T-cell (primary cell): ENCODE measurements at regions of chr11 and their contacts with region 1.

Region 1: DNA sequence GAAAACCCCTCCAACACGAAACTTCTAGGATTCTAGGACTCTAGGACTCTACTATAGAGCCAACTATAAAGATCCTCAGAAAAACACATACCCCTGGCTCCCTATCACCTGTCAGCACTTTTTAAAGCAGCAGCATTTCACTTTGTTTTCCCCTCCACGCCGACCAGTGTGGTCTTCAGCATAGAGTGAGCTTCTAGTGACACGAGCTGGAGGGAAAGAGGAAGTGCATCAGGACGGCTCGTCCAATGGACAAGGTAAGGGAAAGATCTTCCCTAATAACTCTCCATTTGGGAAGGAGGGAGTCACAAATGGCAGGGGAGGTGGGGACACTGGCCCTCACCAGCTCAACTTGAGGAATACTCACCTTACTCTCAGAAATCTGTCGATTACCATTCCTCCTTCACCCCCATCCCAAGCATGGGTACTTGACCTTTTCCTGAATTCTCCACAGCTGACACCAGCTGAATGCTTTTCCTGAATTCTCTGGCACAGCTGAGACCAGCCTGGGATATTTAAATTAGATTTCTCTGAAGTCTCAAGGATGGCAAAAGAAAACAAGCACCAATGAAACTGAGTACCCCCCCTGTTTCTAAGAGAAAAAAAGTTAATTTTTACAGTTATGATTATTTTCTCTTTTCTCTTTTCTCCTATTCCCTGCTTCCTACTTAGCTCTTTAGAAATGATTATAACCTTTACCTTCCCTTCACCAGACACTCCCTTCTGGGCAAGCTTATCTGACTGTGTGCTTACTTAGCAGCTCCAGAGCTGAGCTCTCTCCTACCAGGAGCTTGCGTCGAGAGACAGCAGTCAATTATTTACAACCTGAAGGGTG is 33.3 kb upstream of the NNMT start:
- DNase-seq: peak in 9 of 35 experiments; percentile 8 to 51 (median 17)
- ATAC-seq: peak in 3 of 4 experiments; percentile 38 to 71 (median 41)
- H3K4me3 ChIP-seq: no peak overlapping the region
- H3K4me3 Mint-ChIP-seq: no peak overlapping the region
- H3K27ac ChIP-seq: no peak overlapping the region
- H3K27ac Mint-ChIP-seq: no peak overlapping the region
- H3K4me1 ChIP-seq: peaks cover 0 to 4% of the 10 kb centered on the region in 2 experiments
- H3K4me1 Mint-ChIP-seq: peaks cover 0 to 13% (median 2%) of the 10 kb centered on the region in 3 donors
- H3K27me3 ChIP-seq: peaks cover under 1 to 2% of the 10 kb centered on the region in 2 experiments
- H3K27me3 Mint-ChIP-seq: peaks cover 0 to 2% of the 10 kb centered on the region in 2 donors

Region 2: DNA sequence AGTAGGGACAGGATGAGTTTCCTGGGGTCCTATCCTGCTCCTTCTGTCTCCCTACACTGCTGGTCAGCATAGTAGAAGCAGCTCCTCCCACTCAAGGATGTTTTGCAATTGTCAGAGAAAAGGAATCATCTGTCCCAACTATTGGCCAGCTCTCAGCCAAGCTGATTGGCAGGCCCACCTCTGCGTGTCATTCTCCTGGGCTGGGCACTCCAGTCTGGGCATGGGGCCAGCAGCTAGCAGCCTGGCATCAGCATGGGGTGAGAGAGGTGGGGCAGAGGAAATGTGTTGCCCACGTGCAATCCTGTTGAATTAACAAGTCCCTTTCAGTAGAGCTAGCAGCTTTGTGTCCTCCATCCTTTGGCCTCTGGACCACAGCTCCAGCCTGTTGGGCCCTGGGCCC is 861.2 kb before region 1 on chr11:
- CTCF ChIA-PET with region 1: no interaction called
- POLR2A ChIA-PET with region 1: no interaction called
- DNase-seq: no peak
- ATAC-seq: peak in 1 of 4 experiments; percentile 27
- H3K4me3 ChIP-seq: no peak overlapping the region
- H3K4me3 Mint-ChIP-seq: no peak overlapping the region
- H3K27ac ChIP-seq: no peak overlapping the region
- H3K27ac Mint-ChIP-seq: no peak overlapping the region
- H3K4me1 ChIP-seq: no peaks in the 10 kb centered on the region
- H3K4me1 Mint-ChIP-seq: no peaks in the 10 kb centered on the region
- H3K27me3 ChIP-seq: peaks cover 0 to 9% of the 10 kb centered on the region in 2 experiments
- H3K27me3 Mint-ChIP-seq: peaks cover 0 to 2% of the 10 kb centered on the region in 2 donors

Region 3: DNA sequence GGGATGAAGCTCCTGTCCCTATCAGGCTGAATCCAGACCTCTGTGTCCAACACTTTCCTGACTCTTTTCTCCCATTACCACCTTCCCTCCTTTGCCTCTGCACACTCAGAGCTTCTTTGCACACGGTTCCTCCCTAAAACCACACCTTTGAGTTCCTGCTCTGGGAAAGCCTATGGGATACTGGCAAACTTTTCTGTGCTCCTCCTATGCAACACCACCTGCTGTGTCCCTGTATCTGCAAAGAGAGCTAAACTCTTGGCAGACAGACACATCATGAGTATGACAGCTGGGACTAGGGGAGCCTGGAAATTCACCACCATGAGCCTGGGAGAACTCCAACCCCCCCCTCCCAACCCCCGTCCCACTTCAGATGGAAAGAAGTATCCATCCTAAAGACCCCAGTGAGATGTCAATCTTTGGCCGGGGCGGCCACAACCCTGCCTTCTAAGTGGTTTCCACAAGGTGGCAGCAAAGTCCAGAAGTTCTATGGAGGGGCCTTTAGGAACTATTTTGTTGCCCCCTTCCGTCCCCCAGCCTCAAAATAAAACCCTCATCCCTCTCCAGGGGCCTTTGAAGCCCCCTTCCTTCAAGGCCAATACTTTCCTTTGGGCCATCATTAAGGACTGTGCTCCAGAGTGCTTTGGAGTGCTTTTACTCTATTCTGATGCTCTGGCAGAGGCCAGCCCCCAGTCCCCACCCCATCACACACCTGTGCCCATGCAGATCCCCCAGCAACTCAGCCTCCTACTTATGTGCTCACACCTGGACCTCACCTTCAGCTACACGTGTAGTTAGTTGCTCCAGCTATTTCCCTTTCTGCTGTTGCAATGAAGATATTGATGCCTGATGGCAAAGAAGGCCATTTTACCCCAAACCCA is 268.6 kb before region 1 on chr11:
- CTCF ChIA-PET with region 1: interaction called, 63 to 86 read pairs
- POLR2A ChIA-PET with region 1: interaction called in 1 of 2 experiments, 4 read pairs
- DNase-seq: peak in 28 of 35 experiments; percentile 4 to 62 (median 26)
- ATAC-seq: peak in 3 of 4 experiments; percentile 41 to 57 (median 44)
- H3K4me3 ChIP-seq: no peak overlapping the region
- H3K4me3 Mint-ChIP-seq: no peak overlapping the region
- H3K27ac ChIP-seq: no peak overlapping the region
- H3K27ac Mint-ChIP-seq: no peak overlapping the region
- H3K4me1 ChIP-seq: no peaks in the 10 kb centered on the region
- H3K4me1 Mint-ChIP-seq: peaks cover 2 to 9% (median 3%) of the 10 kb centered on the region in 3 donors
- H3K27me3 ChIP-seq: peaks cover 0 to 49% of the 10 kb centered on the region in 2 experiments
- H3K27me3 Mint-ChIP-seq: peaks cover 29 to 33% of the 10 kb centered on the region in 2 donors

Region 4: GRCh38 chr11:114192841-114193389 is 70.0 kb before region 1 on chr11:
- CTCF ChIA-PET with region 1: interaction called, 3 to 10 read pairs
- POLR2A ChIA-PET with region 1: no interaction called
- DNase-seq: no peak
- ATAC-seq: peak in 1 of 4 experiments; percentile 35
- H3K4me3 ChIP-seq: no peak overlapping the region
- H3K4me3 Mint-ChIP-seq: no peak overlapping the region
- H3K27ac ChIP-seq: no peak overlapping the region
- H3K27ac Mint-ChIP-seq: no peak overlapping the region
- H3K4me1 ChIP-seq: peaks cover 0 to 5% of the 10 kb centered on the region in 2 experiments
- H3K4me1 Mint-ChIP-seq: peaks cover 23 to 44% (median 33%) of the 10 kb centered on the region in 3 donors
- H3K27me3 ChIP-seq: no peaks in the 10 kb centered on the region
- H3K27me3 Mint-ChIP-seq: no peaks in the 10 kb centered on the region

Region 5: DNA sequence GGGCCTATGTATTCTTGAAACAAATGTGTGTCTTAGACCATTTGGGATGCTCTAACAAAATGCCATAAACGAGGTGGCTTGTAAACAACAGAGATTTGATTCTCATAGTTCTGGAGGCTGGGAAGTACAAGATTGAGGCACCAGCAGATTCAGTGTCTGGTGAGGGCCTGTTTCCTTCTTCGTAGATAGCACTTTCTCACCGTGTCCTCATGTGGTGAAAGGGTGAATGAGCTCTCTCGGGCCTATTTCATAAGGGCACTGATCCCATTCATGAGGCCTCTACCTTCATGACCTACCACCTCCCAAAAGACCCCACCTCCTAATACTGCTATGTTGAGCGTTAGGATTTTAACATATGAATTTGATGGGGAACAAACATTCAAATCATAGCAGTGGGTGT is 26.9 kb after region 1 on chr11:
- CTCF ChIA-PET with region 1: no interaction called
- POLR2A ChIA-PET with region 1: no interaction called
- DNase-seq: no peak
- ATAC-seq: no peak
- H3K4me3 ChIP-seq: no peak overlapping the region
- H3K4me3 Mint-ChIP-seq: no peak overlapping the region
- H3K27ac ChIP-seq: no peak overlapping the region
- H3K27ac Mint-ChIP-seq: no peak overlapping the region
- H3K4me1 ChIP-seq: no peaks in the 10 kb centered on the region
- H3K4me1 Mint-ChIP-seq: peaks cover 0 to 5% (median 3%) of the 10 kb centered on the region in 3 donors
- H3K27me3 ChIP-seq: peaks cover 0 to 2% of the 10 kb centered on the region in 2 experiments
- H3K27me3 Mint-ChIP-seq: peaks cover 5% of the 10 kb centered on the region in 2 donors